ENCODE measurements at regions of chr17 and their contacts with region 1.

Region 1: DNA sequence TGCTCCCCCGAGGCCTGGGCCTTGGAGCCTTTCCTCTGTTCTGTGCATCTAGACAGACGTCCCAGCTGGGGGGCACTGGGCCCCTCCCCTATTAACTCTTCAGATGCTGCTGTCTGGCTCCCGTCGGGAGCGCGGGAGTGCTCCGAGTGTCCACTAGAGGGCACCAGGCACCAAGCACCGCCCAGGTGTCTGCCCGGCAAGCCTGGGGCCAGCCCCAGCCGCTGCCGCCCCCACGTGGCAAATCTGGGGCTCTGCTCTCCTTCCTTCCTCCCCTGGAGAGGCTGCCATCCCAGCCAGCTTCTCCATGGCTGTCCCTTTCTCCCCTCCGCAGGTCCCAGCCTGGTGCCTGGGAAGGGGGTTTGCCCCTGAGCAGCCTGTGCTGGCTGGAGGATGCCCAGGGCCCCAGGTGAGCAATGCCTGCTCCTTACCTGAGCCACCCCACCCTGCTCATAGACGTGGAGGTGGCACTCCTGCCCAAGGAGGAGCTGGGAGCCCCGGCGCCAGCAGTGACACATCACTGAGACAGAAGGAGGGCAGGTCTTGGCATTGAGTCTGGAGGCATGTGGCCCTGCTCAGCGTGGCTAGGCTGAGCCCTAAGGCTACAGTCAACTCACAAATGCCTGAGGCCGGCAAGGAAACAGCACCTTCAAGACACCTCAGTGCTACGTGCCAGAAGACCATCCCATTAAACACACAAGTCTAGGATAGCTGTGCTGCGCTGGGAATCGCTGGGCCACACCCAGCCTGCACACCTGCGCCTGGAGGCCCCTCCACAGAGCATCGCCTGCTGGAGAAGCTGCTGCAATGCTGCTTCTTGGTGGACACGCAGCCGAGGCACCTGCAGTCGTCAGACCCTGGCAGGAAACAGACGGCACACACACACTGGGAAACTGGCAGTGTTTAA is 19.7 kb downstream of the TMEM235 start:
- DNase-seq: peak; percentile 95

Region 2: GRCh38 chr17:78237401-78238012 is 13.6 kb before region 1 on chr17:
- CTCF ChIA-PET with region 1: interaction called, 10 read pairs
- POLR2A ChIA-PET with region 1: interaction called, 7 read pairs
- DNase-seq: no peak

Region 3: DNA sequence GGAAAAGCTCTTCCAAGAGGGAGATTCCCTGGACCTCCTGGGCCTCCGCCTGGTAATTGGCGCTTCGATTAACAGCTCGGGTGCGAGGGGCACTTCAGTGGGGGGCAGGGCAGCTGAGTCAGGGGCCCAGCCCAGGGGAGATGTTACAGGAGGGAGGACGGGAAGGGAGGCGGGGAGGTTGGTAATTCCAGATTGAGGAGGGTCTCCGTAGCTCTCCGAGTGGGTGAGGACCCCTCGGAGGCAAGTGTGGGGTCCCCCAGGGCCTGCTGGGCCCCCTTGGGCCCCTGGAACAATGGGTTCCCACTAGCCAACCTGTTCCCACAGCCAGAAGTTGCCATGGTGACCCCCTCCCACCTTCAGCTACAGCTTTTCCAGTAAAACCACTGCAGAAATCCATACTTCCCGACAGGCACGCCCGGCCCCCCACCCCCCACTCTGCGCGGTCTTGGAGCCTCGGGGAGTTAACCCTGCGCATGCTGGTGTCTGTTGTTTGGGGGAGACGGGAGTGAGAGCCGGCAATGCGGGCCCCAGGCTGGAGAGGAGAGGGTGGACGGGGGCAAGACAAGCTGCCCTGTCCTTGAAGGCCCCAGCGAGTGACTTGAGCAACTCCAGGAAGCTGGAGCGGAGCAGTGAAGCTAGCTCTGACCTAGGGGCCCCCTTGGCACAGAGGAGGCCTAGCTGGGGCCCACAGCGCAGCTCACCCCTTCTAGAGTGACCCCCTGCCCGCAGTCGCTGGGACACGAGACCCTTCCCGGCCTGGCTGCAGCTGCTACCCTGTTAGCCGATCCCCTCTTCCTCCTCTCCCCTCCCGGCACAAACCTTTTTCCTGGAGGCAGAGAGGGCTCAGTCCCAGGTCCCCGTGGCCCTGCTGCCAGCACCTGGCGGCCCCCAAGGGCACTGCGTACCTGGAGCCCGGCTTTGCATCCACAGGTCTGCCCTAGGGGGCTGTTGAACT is 18.1 kb after region 1 on chr17:
- CTCF ChIA-PET with region 1: interaction called, 4 read pairs
- POLR2A ChIA-PET with region 1: interaction called, 10 read pairs
- DNase-seq: no peak

Region 4: GRCh38 chr17:78341559-78342448 is 90.7 kb after region 1 on chr17:
- CTCF ChIA-PET with region 1: no interaction called
- POLR2A ChIA-PET with region 1: no interaction called
- DNase-seq: peak; percentile 63

Region 5: GRCh38 chr17:78421484-78422266 is 170.5 kb after region 1 on chr17:
- CTCF ChIA-PET with region 1: interaction called, 11 read pairs
- POLR2A ChIA-PET with region 1: interaction called, 3 read pairs
- DNase-seq: peak; percentile 90